ENCODE measurements at regions of chr20 and their contacts with region 1.

Region 1: DNA sequence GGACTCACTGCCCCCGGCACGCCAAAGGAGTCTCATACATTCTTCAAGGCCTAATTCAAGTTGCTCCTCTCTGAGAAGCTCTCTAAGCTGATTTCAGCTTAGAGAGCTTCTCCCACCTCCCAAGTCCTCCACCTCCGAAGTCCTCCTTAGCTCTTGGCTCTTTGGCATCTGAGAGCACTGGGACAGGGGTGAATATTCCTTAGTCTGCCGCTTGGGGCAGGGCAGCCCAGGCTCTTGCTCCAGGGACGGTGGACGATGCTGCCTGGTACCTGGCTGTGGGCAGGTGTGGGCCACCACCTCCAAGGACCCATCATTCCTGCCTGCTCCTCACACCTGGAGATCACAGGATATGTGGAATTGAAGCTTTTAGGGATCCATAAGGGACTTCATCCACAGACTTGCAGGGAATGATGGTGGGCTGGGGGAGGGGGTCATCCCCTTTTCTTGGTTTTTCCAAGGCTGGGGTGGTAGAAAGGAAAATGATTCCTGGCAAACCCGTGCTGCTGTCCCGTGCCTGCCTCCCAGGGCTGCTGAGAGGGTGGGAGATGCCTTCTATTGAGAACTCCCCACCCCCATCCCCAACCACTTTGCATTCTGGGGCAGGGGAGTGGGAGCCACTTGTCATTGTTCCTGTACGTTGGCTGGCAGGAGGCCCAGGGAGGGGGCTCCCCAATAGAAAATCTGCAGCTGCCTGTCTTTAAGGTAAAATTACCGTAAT is 57.4 kb downstream of the ARHGAP40 start:
- DNase-seq: peak; percentile 45
- ATAC-seq: peak; percentile 92
- H3K4me3 Mint-ChIP-seq: no peak overlapping the region
- H3K27ac Mint-ChIP-seq: no peak overlapping the region
- H3K4me1 Mint-ChIP-seq: no peaks in the 10 kb centered on the region
- H3K27me3 Mint-ChIP-seq: peaks cover 21% of the 10 kb centered on the region
- CTCF ChIP-seq: peak; percentile 69

Region 2: DNA sequence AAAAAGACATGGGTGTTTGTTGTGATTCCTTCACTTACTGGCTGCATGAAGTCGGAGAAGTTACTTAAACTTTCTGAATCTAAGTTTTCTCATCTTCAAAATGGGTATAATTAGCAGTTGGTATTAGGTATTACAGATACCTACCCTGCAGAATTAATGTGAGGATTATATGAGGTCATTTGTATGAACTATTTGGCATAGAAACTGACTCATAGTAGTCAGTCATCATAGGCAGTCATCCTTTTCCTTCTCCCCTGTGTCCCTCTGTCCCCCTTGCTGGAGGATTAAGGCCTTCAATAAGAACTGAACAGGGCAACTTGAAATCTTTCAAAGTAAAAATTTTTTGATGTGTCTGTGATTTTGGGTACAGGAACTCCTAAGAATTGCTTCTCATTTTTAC is 160.1 kb before region 1 on chr20:
- CTCF ChIA-PET with region 1: no interaction called
- POLR2A ChIA-PET with region 1: no interaction called
- intact Hi-C with region 1: no loop called
- DNase-seq: no peak
- ATAC-seq: no peak
- H3K4me3 Mint-ChIP-seq: no peak overlapping the region
- H3K27ac Mint-ChIP-seq: no peak overlapping the region
- H3K4me1 Mint-ChIP-seq: peaks cover 5% of the 10 kb centered on the region
- H3K27me3 Mint-ChIP-seq: no peaks in the 10 kb centered on the region
- CTCF ChIP-seq: no peak

Region 3: GRCh38 chr20:38645980-38646858 is 12.8 kb before region 1 on chr20:
- CTCF ChIA-PET with region 1: interaction called, 34 read pairs
- POLR2A ChIA-PET with region 1: no interaction called
- intact Hi-C with region 1: no loop called
- DNase-seq: peak; percentile 86
- ATAC-seq: peak; percentile 96
- H3K4me3 Mint-ChIP-seq: peak overlapping the region; percentile 59
- H3K27ac Mint-ChIP-seq: no peak overlapping the region
- H3K4me1 Mint-ChIP-seq: no peaks in the 10 kb centered on the region
- H3K27me3 Mint-ChIP-seq: peaks cover 25% of the 10 kb centered on the region
- CTCF ChIP-seq: peak; percentile 96

Region 4: GRCh38 chr20:38674092-38674764 is 15.2 kb after region 1 on chr20:
- CTCF ChIA-PET with region 1: interaction called, 20 read pairs
- POLR2A ChIA-PET with region 1: no interaction called
- intact Hi-C with region 1: no loop called
- DNase-seq: peak; percentile 75
- ATAC-seq: peak; percentile 92
- H3K4me3 Mint-ChIP-seq: peak overlapping the region; percentile 75
- H3K27ac Mint-ChIP-seq: no peak overlapping the region
- H3K4me1 Mint-ChIP-seq: peaks cover 7% of the 10 kb centered on the region
- H3K27me3 Mint-ChIP-seq: peaks cover 33% of the 10 kb centered on the region
- CTCF ChIP-seq: no peak